Naive thymus-derived CD4-positive, alpha-beta T cell (primary cell): ENCODE measurements at regions of chr12 and their contacts with region 1.

Region 1: GRCh38 chr12:57031138-57031725 is 14.9 kb upstream of the TAC3 start:
- DNase-seq: peak in 6 of 9 donors; percentile 26 to 55 (median 41)
- ATAC-seq: peak; percentile 75
- H3K4me3 ChIP-seq: no peak overlapping the region
- H3K4me3 Mint-ChIP-seq: peak overlapping the region; percentile 18 to 80 (median 66)
- H3K27ac ChIP-seq: no peak overlapping the region
- H3K27ac Mint-ChIP-seq: peak overlapping the region; percentile 44 to 94 (median 69)
- H3K4me1 ChIP-seq: peaks cover 6 to 44% of the 10 kb centered on the region in 2 donors
- H3K4me1 Mint-ChIP-seq: peaks cover 26 to 70% (median 53%) of the 10 kb centered on the region in 7 donors
- H3K27me3 ChIP-seq: no peaks in the 10 kb centered on the region
- H3K27me3 Mint-ChIP-seq: no peaks in the 10 kb centered on the region

Region 2: DNA sequence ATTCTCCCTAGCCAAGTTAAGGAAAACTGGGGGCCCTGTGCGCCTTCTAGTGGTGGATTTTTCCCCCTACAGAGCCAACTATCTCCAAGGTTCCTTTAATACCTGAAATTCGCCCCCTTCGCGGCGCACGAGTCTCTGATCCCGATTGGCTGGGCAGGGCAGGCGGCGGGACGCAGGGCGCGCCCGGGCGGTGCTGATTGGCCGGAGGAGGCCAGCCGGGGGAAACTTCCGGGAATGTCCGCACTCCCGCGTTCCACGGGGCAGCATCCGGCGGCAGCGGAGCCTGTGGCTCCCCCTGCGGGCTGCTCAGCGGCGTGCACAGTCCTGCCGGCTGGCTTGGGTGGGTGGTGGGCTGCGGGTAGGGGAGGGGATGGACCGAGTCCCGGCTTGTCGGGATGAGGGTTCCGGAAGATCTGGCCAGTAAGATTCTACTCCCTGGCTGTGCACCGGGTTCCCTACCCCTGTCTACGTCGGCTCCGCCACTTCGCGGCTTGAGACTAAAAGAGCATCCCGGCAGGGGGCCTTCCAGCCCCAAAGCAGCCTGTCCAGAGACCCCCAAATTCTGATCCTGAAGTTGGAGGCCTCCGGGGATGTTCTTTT is 807.0 kb before region 1 on chr12 and contains the start of gene NABP2:
- CTCF ChIA-PET with region 1: no interaction called
- POLR2A ChIA-PET with region 1: no interaction called
- intact Hi-C with region 1: no loop called
- DNase-seq: peak; percentile 78 to 97 (median 81)
- ATAC-seq: peak; percentile 85
- H3K4me3 ChIP-seq: peak within 1 kb of the TSS; percentile 82
- H3K4me3 Mint-ChIP-seq: peak within 1 kb of the TSS; percentile 77 to 99 (median 87)
- H3K27ac ChIP-seq: peak within 1 kb of the TSS; percentile 98
- H3K27ac Mint-ChIP-seq: peak within 1 kb of the TSS; percentile 78 to 100 (median 91)
- H3K4me1 ChIP-seq: peaks cover 22 to 27% of the 10 kb centered on the region in 2 donors
- H3K4me1 Mint-ChIP-seq: peaks cover 16 to 57% (median 46%) of the 10 kb centered on the region in 7 donors
- H3K27me3 ChIP-seq: no peaks in the 10 kb centered on the region
- H3K27me3 Mint-ChIP-seq: peaks cover 0 to 3% (median 0%) of the 10 kb centered on the region in 5 donors
- total RNA-seq, gene NABP2: 9.2 to 61.2 (median 11.8) TPM

Region 3: DNA sequence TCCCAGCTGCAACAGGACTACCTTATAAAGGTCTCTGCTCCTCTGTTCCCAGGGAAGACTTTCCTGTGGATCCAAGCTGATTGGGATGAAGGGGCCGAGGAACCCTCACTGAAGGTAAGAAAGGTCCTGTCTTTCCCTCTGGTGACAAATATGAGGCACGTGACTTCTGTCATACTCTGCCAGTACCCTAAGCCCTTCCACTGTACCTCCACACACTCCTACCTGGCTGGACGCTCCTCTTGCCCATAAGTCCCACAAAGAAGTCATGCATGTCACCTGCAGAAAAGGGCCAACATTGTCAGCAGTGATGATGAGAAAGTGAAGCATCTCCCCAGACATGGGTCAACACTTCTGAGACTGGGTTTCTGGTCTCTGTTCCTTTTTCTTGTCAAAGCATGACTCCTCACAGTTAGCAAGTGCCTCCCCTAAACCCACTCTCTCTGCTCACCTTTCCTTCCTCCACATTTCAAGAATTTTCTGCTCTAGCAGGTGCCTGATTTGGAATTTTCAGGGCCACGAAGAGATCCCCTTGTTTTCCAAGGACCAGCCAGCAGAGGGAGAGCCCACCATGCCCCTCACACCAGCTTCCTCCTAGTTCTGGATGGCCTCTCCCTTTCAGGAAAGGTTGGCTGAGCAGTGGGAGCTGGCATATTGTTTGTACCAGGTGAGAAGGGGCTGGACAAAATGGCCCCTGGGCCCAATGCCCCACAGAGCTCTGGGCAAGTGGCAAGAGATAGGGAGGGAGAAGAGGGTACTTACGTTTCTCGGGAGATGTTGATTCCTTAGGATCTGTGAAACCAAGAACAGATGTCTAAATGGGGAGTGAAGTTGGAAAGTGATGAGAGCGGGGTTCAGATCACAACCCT is 18.4 kb before region 1 on chr12:
- CTCF ChIA-PET with region 1: interaction called, 110 read pairs
- POLR2A ChIA-PET with region 1: interaction called, 14 read pairs
- intact Hi-C with region 1: loop called in 1 of 2 experiments (anchors 1 kb)
- DNase-seq: no peak
- ATAC-seq: no peak
- H3K4me3 ChIP-seq: no peak overlapping the region
- H3K4me3 Mint-ChIP-seq: peak overlapping the region in 3 of 10 donors; percentile 45 to 57 (median 48)
- H3K27ac ChIP-seq: no peak overlapping the region
- H3K27ac Mint-ChIP-seq: peak overlapping the region in 7 of 9 donors; percentile 14 to 95 (median 76)
- H3K4me1 ChIP-seq: peaks cover 5 to 35% of the 10 kb centered on the region in 2 donors
- H3K4me1 Mint-ChIP-seq: peaks cover 18 to 72% (median 55%) of the 10 kb centered on the region in 7 donors
- H3K27me3 ChIP-seq: no peaks in the 10 kb centered on the region
- H3K27me3 Mint-ChIP-seq: peaks cover 0 to 14% (median 0%) of the 10 kb centered on the region in 5 donors

Region 4: DNA sequence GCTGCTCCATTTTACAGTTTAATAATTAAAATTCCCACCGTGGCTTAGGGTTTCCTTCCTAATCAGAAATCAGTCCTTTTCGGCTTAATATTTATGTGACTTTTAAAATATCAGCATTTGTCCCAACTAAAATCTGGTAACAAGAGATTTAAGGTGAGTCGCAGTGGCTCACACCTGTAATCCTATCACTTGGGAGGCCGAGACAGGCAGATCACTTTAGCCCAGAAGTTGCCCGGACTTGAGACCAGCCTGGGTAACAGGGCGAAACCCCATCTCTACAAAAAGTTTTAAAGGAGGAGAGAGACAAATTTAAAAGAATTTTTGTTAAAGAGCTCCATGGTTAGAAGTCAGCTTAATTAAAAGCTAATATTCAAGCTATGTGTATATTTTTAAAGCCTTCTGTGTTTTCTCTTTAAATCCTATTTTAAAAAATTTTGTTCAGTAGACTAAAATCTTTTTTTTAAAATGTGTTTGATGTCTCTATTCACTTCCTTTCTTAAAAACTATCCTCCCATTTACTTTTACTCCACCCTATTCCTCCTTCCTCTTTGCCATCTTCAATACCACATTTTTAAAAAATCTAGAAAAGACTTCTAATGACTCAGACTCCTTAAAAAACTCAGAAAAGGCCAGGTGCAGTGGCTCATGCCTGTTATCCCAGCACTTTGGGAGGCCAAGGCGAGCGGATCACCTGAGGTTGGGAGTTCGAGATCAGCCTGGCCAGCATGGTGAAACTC is 11.1 kb before region 1 on chr12:
- CTCF ChIA-PET with region 1: interaction called, 12 read pairs
- POLR2A ChIA-PET with region 1: interaction called, 13 read pairs
- intact Hi-C with region 1: loop called in 1 of 2 experiments (anchors 1 kb)
- DNase-seq: peak in 1 of 9 donors; percentile 34
- ATAC-seq: no peak
- H3K4me3 ChIP-seq: no peak overlapping the region
- H3K4me3 Mint-ChIP-seq: peak overlapping the region in 9 of 10 donors; percentile 60 to 84 (median 75)
- H3K27ac ChIP-seq: peak overlapping the region; percentile 59
- H3K27ac Mint-ChIP-seq: peak overlapping the region in 8 of 9 donors; percentile 71 to 96 (median 90)
- H3K4me1 ChIP-seq: peaks cover 0 to 26% of the 10 kb centered on the region in 2 donors
- H3K4me1 Mint-ChIP-seq: peaks cover 6 to 58% (median 40%) of the 10 kb centered on the region in 7 donors
- H3K27me3 ChIP-seq: no peaks in the 10 kb centered on the region
- H3K27me3 Mint-ChIP-seq: peaks cover 0 to 2% (median 0%) of the 10 kb centered on the region in 5 donors

Region 5: DNA sequence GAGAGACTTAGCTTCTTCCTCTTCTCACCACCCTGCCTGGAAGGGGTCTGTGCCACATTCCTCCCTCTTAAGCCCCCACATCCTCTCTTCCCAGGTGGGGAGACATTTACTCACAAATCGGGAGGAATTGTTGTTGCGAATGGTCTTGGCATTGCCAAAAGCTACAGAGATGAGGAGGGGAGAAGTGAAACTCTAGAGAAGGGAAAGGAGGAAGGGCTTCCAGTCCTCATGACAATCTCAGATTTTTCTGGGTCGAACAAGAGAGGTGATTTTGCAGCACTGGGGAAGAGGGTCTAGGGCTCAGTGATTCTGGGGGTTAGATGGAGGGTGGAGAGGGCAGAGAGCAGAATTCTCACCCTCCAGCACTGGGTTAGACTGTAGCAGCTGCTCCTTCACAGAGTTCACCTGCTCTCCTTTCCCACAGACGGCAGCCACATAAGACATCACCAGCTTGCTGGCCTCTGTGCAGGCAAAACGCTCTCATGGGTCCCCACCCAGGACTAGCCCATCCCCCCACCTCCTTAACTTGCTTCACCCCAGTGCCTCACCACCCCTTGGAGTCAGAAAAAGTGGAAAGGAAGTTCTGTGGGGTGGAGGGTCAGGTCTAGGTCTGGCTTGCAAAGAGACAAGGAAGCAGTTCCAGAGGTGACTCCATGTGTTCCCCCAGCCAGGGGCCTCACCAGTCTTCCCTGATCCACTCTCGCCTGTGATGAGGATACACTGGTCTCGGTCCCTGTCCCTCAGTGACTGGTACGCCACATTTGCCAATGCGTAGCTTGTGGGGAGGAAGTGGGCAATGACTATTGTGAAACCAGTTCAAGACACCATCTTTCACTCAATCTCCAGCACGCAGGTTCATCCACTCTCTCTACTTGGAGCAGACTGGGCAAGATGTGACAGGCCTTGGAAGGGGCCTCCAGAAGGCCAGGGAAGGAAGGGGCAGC is 16.0 kb after region 1 on chr12:
- CTCF ChIA-PET with region 1: interaction called, 10 read pairs
- POLR2A ChIA-PET with region 1: interaction called, 10 read pairs
- intact Hi-C with region 1: loop called in 1 of 2 experiments (anchors 2 kb)
- DNase-seq: peak in 5 of 9 donors; percentile 21 to 54 (median 37)
- ATAC-seq: peak; percentile 75
- H3K4me3 ChIP-seq: peak overlapping the region; percentile 11
- H3K4me3 Mint-ChIP-seq: peak overlapping the region; percentile 45 to 79 (median 59)
- H3K27ac ChIP-seq: no peak overlapping the region
- H3K27ac Mint-ChIP-seq: peak overlapping the region; percentile 71 to 93 (median 79)
- H3K4me1 ChIP-seq: peaks cover 19 to 20% of the 10 kb centered on the region in 2 donors
- H3K4me1 Mint-ChIP-seq: peaks cover 25 to 39% (median 34%) of the 10 kb centered on the region in 7 donors
- H3K27me3 ChIP-seq: no peaks in the 10 kb centered on the region
- H3K27me3 Mint-ChIP-seq: peaks cover 0 to 6% (median 0%) of the 10 kb centered on the region in 5 donors

Region 6: DNA sequence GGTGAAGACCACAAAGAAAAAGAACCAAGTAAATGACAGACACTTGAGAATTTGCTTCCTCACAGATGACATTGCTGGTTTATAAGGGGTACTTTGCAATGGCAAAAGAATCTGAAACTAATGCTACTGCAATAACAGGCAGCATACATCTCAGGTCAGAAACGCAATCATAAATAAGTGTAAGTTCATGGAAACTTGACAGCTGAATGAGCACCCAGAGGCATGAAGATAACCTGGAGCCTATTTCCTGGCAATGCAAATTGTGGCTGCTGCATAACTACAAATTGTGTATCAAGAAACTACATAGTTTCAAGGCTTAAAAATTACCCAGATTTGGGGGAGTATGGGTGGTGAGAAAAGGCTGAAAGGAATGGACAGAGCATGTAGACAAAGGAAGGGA is 27.2 kb after region 1 on chr12:
- CTCF ChIA-PET with region 1: interaction called, 43 read pairs
- POLR2A ChIA-PET with region 1: interaction called, 6 read pairs
- intact Hi-C with region 1: loop called (anchors 1 kb)
- DNase-seq: no peak
- ATAC-seq: no peak
- H3K4me3 ChIP-seq: no peak overlapping the region
- H3K4me3 Mint-ChIP-seq: no peak overlapping the region
- H3K27ac ChIP-seq: no peak overlapping the region
- H3K27ac Mint-ChIP-seq: peak overlapping the region in 4 of 9 donors; percentile 13 to 59 (median 36)
- H3K4me1 ChIP-seq: peaks cover 5 to 7% of the 10 kb centered on the region in 2 donors
- H3K4me1 Mint-ChIP-seq: peaks cover 0 to 17% (median 14%) of the 10 kb centered on the region in 7 donors
- H3K27me3 ChIP-seq: no peaks in the 10 kb centered on the region
- H3K27me3 Mint-ChIP-seq: no peaks in the 10 kb centered on the region